Activated CD4-positive, alpha-beta memory T cell treated with anti-CD3 and anti-CD28 coated beads, Interleukin-2, amount 10 ng/mL, durations not matched to agents 7 days and 5 days (primary cell): ENCODE measurements at regions of chrX and their contacts with region 1.

Region 1: DNA sequence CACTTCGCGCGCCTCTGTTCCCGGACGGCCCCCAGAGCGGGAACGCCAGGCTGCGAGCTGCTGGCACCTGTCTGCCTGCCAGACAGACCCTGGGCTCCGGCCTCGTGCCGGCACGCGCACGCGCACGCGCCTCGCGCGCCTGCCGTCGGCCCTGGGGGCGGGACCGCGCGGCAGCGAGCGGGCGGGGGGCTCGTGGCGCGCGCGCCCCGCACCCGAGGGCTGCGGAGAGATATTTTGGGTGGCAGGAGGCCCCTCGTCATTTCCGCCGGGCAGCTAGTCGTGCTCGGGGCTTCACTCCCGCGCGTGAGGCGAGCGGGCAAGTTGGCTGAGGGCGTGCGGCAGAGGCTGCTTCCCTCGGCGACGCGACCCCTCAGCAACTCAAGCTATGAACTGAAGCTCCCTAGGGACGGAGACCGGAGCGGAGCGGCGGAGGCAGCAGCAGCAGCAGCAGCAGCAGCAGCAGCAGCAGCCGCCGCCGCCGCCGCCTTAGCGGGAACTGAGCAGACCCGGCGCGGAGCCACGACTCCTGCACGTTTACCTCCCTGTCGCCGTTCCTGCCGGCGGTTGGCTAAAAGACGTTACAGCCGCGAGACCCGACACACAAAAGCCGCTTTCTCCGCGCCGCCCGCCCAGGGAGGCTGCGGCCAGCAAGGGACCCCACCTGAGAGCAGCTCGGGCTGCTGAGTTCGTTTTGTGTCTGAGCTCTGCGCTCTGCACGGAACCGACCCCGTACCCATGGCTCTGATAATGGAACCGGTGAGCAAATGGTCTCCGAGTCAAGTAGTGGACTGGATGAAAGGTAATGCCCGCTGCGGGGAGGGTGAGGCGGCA is at the start of gene CNKSR2:
- DNase-seq: peak; percentile 56
- H3K4me3 Mint-ChIP-seq: peak within 1 kb of the TSS; percentile 77
- H3K27ac Mint-ChIP-seq: no peak within 1 kb of the TSS
- H3K4me1 Mint-ChIP-seq: peaks cover 25% of the 10 kb centered on the region
- H3K27me3 Mint-ChIP-seq: peaks cover 14% of the 10 kb centered on the region
- total RNA-seq, gene CNKSR2: 2.9 to 3.8 TPM

Region 2: GRCh38 chrX:21408307-21408706 is 33.9 kb after region 1 on chrX:
- CTCF ChIA-PET with region 1: no interaction called
- POLR2A ChIA-PET with region 1: no interaction called
- DNase-seq: no peak
- H3K4me3 Mint-ChIP-seq: no peak overlapping the region
- H3K27ac Mint-ChIP-seq: no peak overlapping the region
- H3K4me1 Mint-ChIP-seq: no peaks in the 10 kb centered on the region
- H3K27me3 Mint-ChIP-seq: no peaks in the 10 kb centered on the region

Region 3: DNA sequence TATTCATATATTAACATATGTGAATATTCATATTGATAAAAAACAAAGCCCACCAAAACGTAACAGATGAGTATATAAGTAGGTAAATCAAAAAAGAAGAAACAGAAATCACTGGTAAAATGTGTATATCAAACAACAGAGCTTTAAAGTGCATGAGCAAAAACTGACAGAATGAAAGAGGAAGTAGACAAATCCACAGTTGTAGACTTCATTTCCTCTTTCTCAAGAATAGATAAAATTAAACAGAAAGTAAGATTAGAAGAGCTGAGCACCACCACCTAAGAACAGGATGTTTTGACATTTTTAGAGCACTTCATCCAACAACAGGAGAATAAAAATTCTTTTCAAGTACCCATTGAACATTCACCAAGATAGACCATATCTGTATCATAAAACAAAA is 64.4 kb after region 1 on chrX:
- CTCF ChIA-PET with region 1: no interaction called
- POLR2A ChIA-PET with region 1: interaction called, 11 read pairs
- DNase-seq: no peak
- H3K4me3 Mint-ChIP-seq: peak overlapping the region; percentile 50
- H3K27ac Mint-ChIP-seq: peak overlapping the region; percentile 85
- H3K4me1 Mint-ChIP-seq: peaks cover 11% of the 10 kb centered on the region
- H3K27me3 Mint-ChIP-seq: no peaks in the 10 kb centered on the region